CD14-positive monocyte (primary cell): ENCODE measurements at regions of chr14 and their contacts with region 1.

Region 1: DNA sequence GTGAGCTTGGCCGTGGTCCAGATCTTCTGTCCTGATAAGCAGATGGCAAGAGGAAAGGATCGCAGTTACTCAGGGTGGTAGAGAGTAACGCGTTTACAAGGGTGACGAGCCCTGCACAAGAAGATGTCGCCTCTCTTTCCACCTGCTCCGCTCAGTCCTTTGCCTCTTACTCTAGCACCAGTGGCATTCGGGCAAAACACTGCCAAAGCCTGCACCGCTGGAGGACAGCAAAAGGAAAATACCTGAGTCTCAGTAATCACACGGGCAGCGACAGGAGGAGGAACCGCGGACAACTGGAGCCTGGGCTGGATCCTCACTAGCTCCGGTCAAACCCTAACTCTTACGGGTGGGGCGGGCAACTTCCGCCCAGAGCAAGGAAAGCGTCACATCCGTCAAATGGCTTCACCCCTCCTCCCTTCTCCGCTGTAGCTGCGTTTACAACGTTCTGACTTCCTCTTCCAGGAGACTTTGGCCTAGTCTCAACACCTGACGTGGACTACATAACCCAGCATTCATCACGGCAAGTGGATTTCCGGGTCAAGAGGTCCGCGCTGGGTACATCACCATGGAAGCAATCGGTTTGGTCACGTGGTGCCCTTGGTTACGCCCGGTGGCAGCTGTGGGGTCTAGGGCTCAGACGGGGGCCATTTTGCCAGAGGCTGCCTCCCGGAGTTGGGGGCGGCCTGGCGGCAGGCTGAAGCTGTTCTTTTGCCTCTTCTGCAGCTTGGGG is at the starts of genes KLHL28 and TOGARAM1:
- DNase-seq: peak; percentile 99 to 100 (median 99)
- H3K4me3 ChIP-seq: peak within 1 kb of the TSS; percentile 80 to 97 (median 85)
- H3K4me3 Mint-ChIP-seq: no peak within 1 kb of the TSS
- H3K27ac ChIP-seq: peak within 1 kb of the TSS; percentile 85 to 94
- H3K27ac Mint-ChIP-seq: no peak within 1 kb of the TSS
- H3K4me1 ChIP-seq: peaks cover 37 to 60% of the 10 kb centered on the region in 2 donors
- H3K4me1 Mint-ChIP-seq: peaks cover 50% of the 10 kb centered on the region
- H3K27me3 ChIP-seq: no peaks in the 10 kb centered on the region
- H3K27me3 Mint-ChIP-seq: no peaks in the 10 kb centered on the region
- CTCF ChIP-seq: no peak
- polyA plus RNA-seq, gene KLHL28: 4.1 to 16.8 (median 16.4) TPM
- polyA plus RNA-seq, gene TOGARAM1: 2.6 to 3.8 (median 3.4) TPM

Region 2: DNA sequence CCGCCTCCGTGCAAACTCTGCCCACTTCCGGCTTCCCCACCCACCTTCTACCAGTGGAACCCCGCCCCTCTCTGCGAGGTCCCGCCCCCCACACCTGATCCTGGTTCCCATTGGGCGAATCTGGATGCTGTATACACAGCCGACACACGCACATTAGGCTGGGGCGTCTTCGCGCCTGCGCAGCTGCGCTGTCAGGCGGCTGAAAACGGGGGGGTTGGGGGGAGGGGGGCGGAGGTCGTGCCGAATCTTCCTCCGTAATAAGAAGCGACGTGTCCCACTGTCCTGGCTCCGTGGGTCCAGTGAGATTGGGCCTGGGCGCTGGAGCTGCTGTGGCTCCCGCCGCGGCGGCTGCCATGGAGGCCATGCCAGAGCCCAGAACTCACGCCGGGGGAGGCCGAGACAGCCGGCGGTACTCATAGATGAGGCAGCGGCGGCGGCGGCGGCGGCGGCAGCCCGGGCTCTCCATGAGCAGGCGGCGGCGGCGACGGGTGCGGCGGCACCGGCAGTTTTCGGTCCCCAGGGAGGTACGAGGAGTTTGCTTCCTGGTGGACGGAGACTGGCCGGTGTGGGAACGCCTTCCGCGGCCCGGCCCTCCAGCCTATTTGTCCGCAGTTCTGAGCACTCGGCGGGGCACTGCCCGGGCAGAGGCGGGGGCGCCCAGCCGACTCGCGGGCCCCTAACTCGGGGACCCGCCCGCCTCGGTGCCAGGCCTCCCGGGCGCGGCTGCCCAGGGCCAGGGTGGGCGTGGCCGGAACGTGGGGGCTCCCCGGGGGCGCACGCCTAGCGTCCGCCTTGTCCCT is 64.5 kb before region 1 on chr14:
- intact Hi-C with region 1: loop called (anchors 2 to 5 kb)
- DNase-seq: peak; percentile 95 to 96 (median 96)
- H3K4me3 ChIP-seq: peak overlapping the region; percentile 75 to 83 (median 82)
- H3K4me3 Mint-ChIP-seq: peak overlapping the region; percentile 86 to 92
- H3K27ac ChIP-seq: peak overlapping the region; percentile 79 to 84
- H3K27ac Mint-ChIP-seq: peak overlapping the region; percentile 87 to 96 (median 95)
- H3K4me1 ChIP-seq: peaks cover 6 to 8% of the 10 kb centered on the region in 2 donors
- H3K4me1 Mint-ChIP-seq: peaks cover 12% of the 10 kb centered on the region
- H3K27me3 ChIP-seq: no peaks in the 10 kb centered on the region
- H3K27me3 Mint-ChIP-seq: peaks cover 0 to 5% (median 0%) of the 10 kb centered on the region in 3 donors
- CTCF ChIP-seq: no peak

Region 3: DNA sequence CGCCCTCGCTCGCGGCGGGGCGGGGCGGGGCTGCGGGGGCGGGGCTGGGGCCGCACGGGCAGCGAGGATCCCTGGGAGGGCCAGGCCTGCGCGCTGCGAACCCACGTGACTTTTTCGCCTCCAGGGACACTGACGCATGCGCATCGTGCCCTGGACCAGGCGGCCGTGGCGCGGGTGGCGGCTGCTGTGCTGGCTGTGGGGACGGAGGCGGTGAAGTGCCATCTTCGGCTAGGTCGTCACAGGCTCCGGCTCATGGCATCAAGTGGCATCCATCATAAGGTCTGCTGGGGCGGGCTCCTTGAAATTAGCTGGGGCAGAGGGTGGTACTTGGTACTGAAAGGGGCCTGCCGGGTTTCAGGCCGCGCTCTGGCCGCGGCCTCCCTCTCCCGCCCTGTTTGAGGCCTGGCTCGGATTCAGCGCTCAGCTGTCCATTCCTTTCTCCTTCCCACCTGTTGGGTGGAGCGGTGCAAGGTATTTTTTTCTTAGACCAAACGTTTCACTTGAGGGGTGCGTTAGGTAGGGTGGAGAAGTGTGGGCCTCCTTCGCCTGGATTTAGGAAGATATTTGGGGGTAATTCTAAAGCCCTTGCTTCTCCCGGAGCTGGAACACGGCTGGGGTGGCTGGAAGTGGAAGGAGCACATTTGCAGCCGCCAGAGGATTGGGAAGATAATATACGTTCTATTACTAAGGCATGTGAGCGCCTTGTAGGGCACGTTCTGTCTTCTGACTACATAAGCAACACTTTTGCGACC is 122.4 kb after region 1 on chr14 and contains the start of gene PRPF39:
- intact Hi-C with region 1: loop called (anchors 5 to 10 kb)
- DNase-seq: peak; percentile 92 to 93 (median 92)
- H3K4me3 ChIP-seq: peak within 1 kb of the TSS; percentile 78 to 94 (median 83)
- H3K4me3 Mint-ChIP-seq: peak within 1 kb of the TSS; percentile 87 to 94
- H3K27ac ChIP-seq: peak within 1 kb of the TSS; percentile 68 to 82
- H3K27ac Mint-ChIP-seq: peak within 1 kb of the TSS; percentile 82 to 95 (median 92)
- H3K4me1 ChIP-seq: peaks cover 20 to 27% of the 10 kb centered on the region in 2 donors
- H3K4me1 Mint-ChIP-seq: peaks cover 41% of the 10 kb centered on the region
- H3K27me3 ChIP-seq: no peaks in the 10 kb centered on the region
- H3K27me3 Mint-ChIP-seq: peaks cover 2 to 7% (median 6%) of the 10 kb centered on the region in 3 donors
- CTCF ChIP-seq: no peak
- polyA plus RNA-seq, gene PRPF39: 3.3 to 26.1 (median 5.4) TPM

Region 4: DNA sequence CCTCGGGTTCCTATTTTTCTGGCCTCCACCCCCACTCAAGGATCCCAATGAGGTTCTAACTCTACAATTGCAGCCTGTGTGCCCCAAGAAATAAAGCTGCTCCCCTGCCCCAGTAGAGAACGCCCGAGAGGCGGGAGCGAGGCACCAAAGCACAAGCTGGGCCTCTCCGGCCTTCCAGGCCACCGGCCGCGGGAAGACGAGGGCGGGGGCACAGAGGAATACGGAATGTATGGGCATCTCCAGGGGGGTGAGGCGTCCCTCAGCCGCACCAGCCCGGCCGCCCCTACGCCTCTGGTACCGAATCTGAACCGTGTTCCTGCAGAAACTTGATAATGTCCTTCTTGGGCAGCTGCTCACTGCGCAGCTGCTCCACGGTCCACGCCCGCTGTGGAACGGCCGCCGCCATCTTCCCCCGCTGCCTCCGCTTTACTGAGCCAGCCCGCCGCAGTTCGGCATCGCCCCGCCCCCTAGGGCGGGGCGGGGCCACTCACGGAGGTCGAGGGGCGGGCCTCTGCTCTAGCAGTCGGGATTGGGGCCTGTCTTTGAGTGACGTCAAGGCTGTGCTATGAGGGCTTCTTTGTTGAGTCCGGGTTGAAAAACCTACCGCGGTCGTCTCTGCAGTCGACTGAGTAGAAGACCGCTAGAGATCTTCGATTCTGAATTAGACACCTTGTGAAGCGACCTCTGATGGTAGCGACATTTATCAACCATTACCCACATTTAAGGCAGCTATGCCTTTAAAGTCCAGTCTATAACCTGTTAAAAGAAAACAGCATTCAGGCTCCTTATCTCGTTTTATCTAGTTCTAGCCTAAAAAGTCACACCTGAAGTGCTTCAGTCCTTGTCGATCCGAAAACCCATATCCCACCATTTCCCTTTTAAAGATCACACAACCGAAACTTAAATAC is 172.5 kb after region 1 on chr14 and contains the start of gene FKBP3:
- intact Hi-C with region 1: loop called (anchors 2 to 5 kb)
- DNase-seq: peak; percentile 96 to 98 (median 97)
- H3K4me3 ChIP-seq: peak within 1 kb of the TSS; percentile 59 to 99 (median 91)
- H3K4me3 Mint-ChIP-seq: peak within 1 kb of the TSS; percentile 98 to 99
- H3K27ac ChIP-seq: peak within 1 kb of the TSS; percentile 73 to 87
- H3K27ac Mint-ChIP-seq: peak within 1 kb of the TSS; percentile 95 to 98 (median 97)
- H3K4me1 ChIP-seq: peaks cover 19 to 28% of the 10 kb centered on the region in 2 donors
- H3K4me1 Mint-ChIP-seq: peaks cover 30% of the 10 kb centered on the region
- H3K27me3 ChIP-seq: no peaks in the 10 kb centered on the region
- H3K27me3 Mint-ChIP-seq: no peaks in the 10 kb centered on the region
- CTCF ChIP-seq: no peak
- polyA plus RNA-seq, gene FKBP3: 18.1 to 50.3 (median 42.5) TPM

Region 5: DNA sequence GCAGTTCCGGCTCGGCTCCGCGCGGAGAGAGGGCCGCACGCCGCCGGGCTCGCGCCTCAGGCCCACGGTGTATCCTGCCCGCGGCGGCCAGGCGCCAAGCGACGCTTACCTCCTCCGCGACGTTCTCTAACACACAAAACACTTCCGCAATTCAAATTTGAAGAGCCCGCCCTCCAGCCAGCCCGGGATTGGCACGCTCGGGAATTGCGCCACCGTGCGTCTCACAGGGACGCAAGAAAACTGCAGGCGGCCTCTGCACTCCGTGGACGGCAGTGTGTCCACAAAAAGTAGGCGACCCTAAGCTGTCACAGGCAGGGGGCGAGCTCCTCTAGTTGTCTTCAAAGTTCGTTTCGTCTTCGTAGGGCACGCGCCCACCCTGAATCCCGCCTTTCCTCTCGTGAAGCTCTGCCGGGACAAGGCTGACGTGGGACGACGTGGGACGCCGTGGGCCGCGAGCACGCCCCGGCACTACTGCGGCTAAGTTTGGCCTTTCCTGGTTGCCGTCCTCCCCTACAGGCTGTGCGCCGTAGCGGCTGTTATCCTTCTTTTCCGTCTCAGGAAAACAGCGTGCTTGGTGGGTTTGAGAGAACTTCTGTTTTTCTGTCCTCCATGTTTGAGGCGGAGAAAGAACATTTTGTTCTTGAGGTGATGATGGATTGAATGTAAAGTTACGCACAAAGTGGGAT is 291.4 kb after region 1 on chr14 and contains the start of gene MIS18BP1:
- intact Hi-C with region 1: loop called in 1 of 2 experiments (anchors 5 kb)
- DNase-seq: peak; percentile 94 to 96 (median 95)
- H3K4me3 ChIP-seq: peak within 1 kb of the TSS; percentile 94 to 98 (median 95)
- H3K4me3 Mint-ChIP-seq: peak within 1 kb of the TSS; percentile 90 to 93
- H3K27ac ChIP-seq: peak within 1 kb of the TSS; percentile 83 to 93
- H3K27ac Mint-ChIP-seq: peak within 1 kb of the TSS; percentile 92 to 98 (median 96)
- H3K4me1 ChIP-seq: peaks cover 49 to 61% of the 10 kb centered on the region in 2 donors
- H3K4me1 Mint-ChIP-seq: peaks cover 44% of the 10 kb centered on the region
- H3K27me3 ChIP-seq: no peaks in the 10 kb centered on the region
- H3K27me3 Mint-ChIP-seq: peaks cover 0 to 1% (median 0%) of the 10 kb centered on the region in 3 donors
- CTCF ChIP-seq: peak; percentile 61
- polyA plus RNA-seq, gene MIS18BP1: 39.2 to 61.8 (median 45.6) TPM